ENCODE measurements at regions of chr22 and their contacts with region 1.

Region 1: GRCh38 chr22:37581504-37581903 is 1.6 kb upstream of the LGALS2 start:
- DNase-seq: no peak
- H3K4me3 ChIP-seq: no peak overlapping the region
- H3K4me3 Mint-ChIP-seq: no peak overlapping the region
- H3K27ac Mint-ChIP-seq: no peak overlapping the region
- H3K4me1 ChIP-seq: peaks cover 30% of the 10 kb centered on the region
- H3K4me1 Mint-ChIP-seq: peaks cover 24% of the 10 kb centered on the region
- H3K27me3 ChIP-seq: no peaks in the 10 kb centered on the region
- H3K27me3 Mint-ChIP-seq: no peaks in the 10 kb centered on the region
- CTCF ChIP-seq: no peak

Region 2: DNA sequence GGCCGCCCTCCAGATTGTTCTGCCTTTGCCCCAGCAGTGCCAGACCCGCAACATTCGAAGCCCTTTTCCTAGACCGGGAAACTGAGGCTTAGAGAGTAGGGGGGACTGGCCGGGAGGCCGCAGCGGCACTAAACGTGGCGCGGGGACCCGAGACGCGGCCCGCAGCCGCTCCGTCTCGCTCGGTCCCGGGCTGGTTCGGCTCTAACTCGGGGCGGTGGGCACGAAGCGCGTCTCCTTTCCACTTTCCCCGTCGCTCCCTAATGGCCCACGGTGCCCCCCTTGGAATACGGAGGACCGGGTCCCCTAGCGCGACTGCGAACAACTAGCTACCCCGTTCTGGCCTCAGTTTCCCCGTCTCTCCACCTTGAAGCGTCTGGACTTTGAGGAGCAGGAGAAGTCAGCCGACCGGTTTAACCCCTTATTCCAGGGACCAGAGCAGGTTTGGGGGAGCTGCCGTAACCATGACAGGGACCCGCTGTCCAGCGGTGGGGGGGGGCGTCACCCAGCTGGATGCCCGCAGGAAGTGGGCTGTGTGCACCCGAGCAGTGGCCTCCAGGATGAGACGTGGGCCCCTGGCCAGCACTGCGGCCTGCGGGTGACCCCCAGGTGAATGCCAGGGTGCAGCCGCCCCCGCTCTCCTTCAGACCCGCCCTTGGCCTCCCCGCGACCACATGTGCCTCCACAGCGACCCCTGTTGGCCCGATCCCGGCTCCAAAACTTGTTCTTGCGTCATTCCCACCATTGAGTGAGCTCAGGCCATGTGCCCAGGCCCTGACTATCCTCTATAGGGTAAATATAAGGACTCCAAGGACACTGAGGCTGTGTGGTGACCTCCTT is 20.1 kb before region 1 on chr22:
- CTCF ChIA-PET with region 1: interaction called, 10 read pairs
- POLR2A ChIA-PET with region 1: interaction called, 7 read pairs
- intact Hi-C with region 1: no loop called
- DNase-seq: peak; percentile 89 to 94
- H3K4me3 ChIP-seq: peak overlapping the region; percentile 81
- H3K4me3 Mint-ChIP-seq: peak overlapping the region; percentile 76
- H3K27ac Mint-ChIP-seq: peak overlapping the region; percentile 70
- H3K4me1 ChIP-seq: peaks cover 46% of the 10 kb centered on the region
- H3K4me1 Mint-ChIP-seq: peaks cover 22% of the 10 kb centered on the region
- H3K27me3 ChIP-seq: no peaks in the 10 kb centered on the region
- H3K27me3 Mint-ChIP-seq: no peaks in the 10 kb centered on the region
- CTCF ChIP-seq: peak; percentile 86 to 90

Region 3: DNA sequence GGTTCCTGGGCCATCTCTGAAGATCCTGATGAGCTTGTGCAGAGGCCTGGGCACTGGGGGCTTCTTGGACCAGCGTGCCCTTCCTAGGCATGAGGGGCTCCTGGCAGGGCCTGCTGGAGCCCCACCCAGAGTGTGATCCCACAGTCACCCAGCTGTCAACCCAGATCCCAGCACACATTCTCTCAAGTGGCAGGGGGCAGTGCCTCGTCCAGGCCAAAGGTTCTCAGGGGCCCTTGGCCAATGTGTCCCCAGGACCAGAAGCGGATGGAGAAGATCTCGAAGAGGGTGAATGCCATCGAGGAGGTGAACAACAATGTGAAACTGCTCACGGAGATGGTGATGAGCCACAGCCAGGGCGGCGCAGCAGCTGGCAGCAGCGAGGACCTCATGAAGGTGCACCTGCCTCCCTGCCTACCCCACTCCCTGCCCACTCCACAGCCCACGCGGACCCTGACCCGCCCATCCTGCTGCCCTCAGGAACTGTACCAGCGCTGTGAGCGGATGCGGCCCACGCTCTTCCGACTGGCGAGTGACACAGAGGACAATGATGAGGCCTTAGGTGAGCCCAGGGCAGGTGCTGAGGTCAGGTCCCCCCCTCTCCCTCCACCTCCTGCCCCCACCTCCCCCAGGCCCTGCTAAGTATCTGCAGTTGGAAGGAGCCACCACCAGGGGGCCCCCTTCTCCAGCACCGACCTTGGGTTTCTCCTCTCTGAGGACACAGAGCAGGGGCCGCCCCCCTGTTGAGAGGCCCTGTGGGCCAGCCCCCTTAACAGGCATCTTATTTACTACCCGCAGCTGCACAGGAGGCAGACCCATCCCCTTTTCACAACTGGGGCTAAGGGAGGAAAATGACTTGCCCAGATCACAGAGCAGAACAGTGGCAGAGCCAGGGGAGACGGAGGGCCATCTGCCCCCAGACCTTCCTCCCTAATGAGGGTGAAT is 41.8 kb after region 1 on chr22:
- CTCF ChIA-PET with region 1: no interaction called
- POLR2A ChIA-PET with region 1: no interaction called
- intact Hi-C with region 1: no loop called
- DNase-seq: peak; percentile 65 to 78
- H3K4me3 ChIP-seq: no peak overlapping the region
- H3K4me3 Mint-ChIP-seq: no peak overlapping the region
- H3K27ac Mint-ChIP-seq: no peak overlapping the region
- H3K4me1 ChIP-seq: no peaks in the 10 kb centered on the region
- H3K4me1 Mint-ChIP-seq: no peaks in the 10 kb centered on the region
- H3K27me3 ChIP-seq: no peaks in the 10 kb centered on the region
- H3K27me3 Mint-ChIP-seq: no peaks in the 10 kb centered on the region
- CTCF ChIP-seq: peak; percentile 88

Measured in Caco-2 (cell line).